Right ventricle myocardium inferior (tissue), 1 donor: ENCODE measurements at regions of chr2 and their contacts with region 1.

Region 1: DNA sequence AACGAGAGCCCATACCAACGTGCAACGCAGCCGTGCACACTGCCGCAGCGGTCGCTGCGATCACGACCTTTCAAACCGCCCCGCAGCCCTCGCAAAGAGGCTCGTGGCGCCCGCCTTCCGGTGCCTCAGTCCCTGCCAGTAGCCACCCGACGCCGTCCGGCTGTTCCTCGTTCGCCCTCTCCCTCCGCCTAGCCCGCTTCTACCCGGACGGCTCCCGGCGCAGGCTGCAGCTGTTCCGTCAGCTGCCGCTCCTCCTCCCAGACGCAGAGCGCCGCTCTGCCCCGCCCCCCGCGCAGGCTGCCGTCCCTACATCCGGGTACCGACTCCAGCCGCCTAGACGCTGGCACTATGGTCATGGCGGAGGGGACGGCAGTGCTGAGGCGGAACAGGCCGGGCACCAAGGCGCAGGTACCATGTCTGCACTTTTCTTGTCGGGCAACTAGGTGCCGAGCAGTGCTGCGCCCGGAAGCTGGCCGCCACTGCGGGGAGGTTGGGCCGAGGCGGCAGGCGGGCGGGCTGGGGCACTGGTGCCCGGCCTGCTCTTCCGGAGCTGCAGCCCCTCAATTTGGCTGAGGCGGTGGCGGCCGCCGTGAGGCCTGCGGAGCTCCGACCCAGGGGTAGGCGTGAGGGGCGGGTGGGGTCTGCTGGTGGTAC is at the start of gene MOB4:
- DNase-seq: peak; percentile 97
- ATAC-seq: peak; percentile 99
- total RNA-seq, gene MOB4: 31.0 TPM

Region 2: GRCh38 chr2:197327472-197328098 is 188.3 kb before region 1 on chr2:
- intact Hi-C with region 1: no loop called
- DNase-seq: no peak
- ATAC-seq: no peak

Region 3: GRCh38 chr2:197434541-197435513 is 81.0 kb before region 1 on chr2 and contains the start of gene SF3B1:
- intact Hi-C with region 1: loop called (anchors 5 kb)
- DNase-seq: peak; percentile 99
- ATAC-seq: peak; percentile 99
- total RNA-seq, gene SF3B1: 126 TPM

Region 4: GRCh38 chr2:197499594-197500526 is 16.0 kb before region 1 on chr2 and contains the starts of genes HSPD1 and HSPE1:
- intact Hi-C with region 1: loop called (anchors 1 kb)
- DNase-seq: peak; percentile 98
- ATAC-seq: peak; percentile 98
- total RNA-seq, gene HSPD1: 145 TPM
- total RNA-seq, gene HSPE1: 105 TPM

Region 5: GRCh38 chr2:197728338-197729207 is 212.7 kb after region 1 on chr2:
- intact Hi-C with region 1: no loop called
- DNase-seq: no peak
- ATAC-seq: no peak

Region 6: GRCh38 chr2:197777823-197778407 is 262.0 kb after region 1 on chr2:
- intact Hi-C with region 1: loop called (anchors 10 kb)
- DNase-seq: no peak
- ATAC-seq: no peak